Transverse colon (tissue), 4 donors: ENCODE measurements at regions of chr5 and their contacts with region 1.

Region 1: GRCh38 chr5:37837414-37838032 is 2.3 kb downstream of the GDNF start:
- DNase-seq: peak; percentile 67
- H3K4me3 ChIP-seq: peak overlapping the region; percentile 30 to 60 (median 42)
- H3K27ac ChIP-seq: peak overlapping the region; percentile 86 to 93 (median 86)
- H3K4me1 ChIP-seq: peaks cover 0 to 39% (median 8%) of the 10 kb centered on the region in 4 donors
- H3K27me3 ChIP-seq: peaks cover 86% of the 10 kb centered on the region
- CTCF ChIP-seq: peak; percentile 63 to 74 (median 71)
- EP300 ChIP-seq: no peak
- POLR2A ChIP-seq: no peak

Region 2: DNA sequence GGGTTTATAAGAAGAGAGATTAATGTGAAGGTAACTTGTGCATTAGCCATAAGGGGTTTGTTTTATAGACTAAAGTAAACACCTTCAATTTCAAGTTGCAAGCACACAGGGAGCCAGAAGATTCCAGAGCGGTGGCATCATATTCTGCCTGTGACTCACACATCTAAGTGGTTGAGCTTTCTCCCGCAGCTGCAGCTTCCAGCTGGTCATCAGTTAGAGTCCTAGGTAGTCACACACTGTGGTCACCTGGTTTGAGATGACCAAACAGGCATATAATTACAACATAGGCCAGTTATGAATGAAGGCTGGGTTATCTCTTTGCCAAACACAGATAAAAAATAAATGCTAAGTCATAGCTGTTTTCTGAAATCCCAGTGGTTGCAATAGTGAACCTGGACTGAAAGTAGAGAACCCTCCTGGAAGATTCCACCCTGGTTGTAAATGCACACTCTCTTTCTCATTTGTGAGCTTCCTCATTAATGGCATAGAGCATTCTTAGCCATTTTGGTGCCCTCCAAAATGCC is 168.9 kb before region 1 on chr5:
- in situ Hi-C with region 1: no loop called
- intact Hi-C with region 1: loop called (anchors 5 kb)
- DNase-seq: peak; percentile 41
- H3K4me3 ChIP-seq: no peak overlapping the region
- H3K27ac ChIP-seq: peak overlapping the region; percentile 51 to 71 (median 68)
- H3K4me1 ChIP-seq: peaks cover 5 to 26% (median 9%) of the 10 kb centered on the region in 4 donors
- H3K27me3 ChIP-seq: no peaks in the 10 kb centered on the region
- CTCF ChIP-seq: no peak
- EP300 ChIP-seq: no peak
- POLR2A ChIP-seq: no peak

Region 3: GRCh38 chr5:37774912-37775483 is 62.5 kb before region 1 on chr5:
- in situ Hi-C with region 1: no loop called
- intact Hi-C with region 1: loop called (anchors 5 kb)
- DNase-seq: no peak
- H3K4me3 ChIP-seq: no peak overlapping the region
- H3K27ac ChIP-seq: no peak overlapping the region
- H3K4me1 ChIP-seq: peaks cover 0 to 8% (median 2%) of the 10 kb centered on the region in 4 donors
- H3K27me3 ChIP-seq: no peaks in the 10 kb centered on the region
- CTCF ChIP-seq: peak in 4 of 5 experiments; percentile 24 to 56 (median 46)
- EP300 ChIP-seq: no peak
- POLR2A ChIP-seq: no peak